Right ventricle myocardium inferior (tissue), 1 donor: ENCODE measurements at regions of chr3 and their contacts with region 1.

Region 1: DNA sequence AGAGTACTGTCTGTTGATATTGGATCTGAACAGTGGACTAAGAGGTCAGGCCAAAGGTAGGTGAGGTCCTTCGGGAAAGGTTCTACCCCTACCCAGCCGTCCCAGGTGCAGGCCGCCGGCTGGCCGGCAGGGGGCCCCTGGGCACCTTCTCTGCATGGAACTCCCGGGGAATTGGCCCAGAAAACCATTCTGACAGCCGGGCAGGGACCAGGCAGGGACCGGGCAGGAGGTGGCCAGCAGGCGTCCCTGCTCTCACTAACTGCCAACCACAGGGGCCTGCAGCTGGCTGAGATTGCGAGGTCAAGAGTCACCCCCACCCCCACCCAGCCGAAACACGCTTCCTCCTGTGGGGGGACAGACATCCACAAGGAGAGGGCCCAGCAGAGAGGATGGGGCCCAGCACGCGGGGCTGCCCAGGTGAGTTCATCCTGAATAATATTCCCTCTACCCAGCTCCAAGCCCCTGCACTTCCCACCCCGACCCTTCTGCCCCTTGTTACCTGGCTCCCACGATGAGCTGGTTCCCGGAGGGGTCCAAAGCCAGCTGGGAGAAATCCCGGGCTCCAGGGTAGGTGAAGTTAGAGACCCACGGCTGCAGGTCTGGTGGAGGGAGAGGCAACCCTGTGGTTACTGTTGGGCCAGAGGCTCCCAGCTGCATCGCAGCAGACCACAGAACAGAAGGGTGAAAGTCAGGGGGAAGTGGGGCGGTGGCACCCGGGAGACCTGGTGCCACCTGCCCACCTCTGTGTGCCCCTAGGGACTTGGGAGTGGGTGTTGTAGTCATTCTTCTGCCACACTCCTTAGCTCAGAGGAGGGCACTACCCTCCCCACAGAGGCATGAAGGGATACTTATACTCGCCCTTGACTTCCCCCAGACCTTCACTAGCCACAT is 84.4 kb downstream of the SEMA5B start:
- DNase-seq: peak; percentile 82
- ATAC-seq: peak; percentile 74

Region 2: GRCh38 chr3:122982216-122983185 is 39.3 kb after region 1 on chr3:
- intact Hi-C with region 1: loop called (anchors 5 kb)
- DNase-seq: no peak
- ATAC-seq: peak; percentile 23

Region 3: DNA sequence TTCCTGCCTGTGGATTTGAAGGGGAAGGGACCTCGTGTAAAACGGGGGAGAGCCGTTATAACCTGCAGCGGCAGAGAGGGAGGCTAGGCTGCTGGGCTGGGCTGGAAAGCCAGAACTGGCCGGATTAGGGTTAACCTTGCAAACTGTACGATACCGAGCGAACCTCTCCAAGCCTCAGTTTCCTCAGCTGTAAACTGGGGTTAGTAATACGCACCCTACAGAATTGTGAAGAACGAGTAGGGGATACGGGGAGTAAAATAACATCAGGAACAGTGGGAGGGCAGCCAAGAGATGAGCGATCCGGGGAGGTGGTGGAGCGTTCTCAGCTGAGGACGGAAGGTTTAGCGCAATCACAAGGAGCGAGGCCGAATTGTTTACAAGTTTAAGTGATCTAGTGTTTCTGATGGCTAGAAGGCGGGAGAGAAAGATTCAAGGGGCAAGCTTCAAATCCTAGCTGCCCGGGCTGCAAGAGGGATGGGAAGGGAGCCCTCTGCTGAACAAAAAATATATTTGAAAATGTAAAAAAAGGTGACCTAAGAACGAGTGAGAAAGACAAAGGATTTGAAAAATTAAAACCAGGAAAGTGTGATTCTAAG is 85.1 kb after region 1 on chr3:
- intact Hi-C with region 1: loop called (anchors 1 kb)
- DNase-seq: no peak
- ATAC-seq: peak; percentile 64

Region 4: DNA sequence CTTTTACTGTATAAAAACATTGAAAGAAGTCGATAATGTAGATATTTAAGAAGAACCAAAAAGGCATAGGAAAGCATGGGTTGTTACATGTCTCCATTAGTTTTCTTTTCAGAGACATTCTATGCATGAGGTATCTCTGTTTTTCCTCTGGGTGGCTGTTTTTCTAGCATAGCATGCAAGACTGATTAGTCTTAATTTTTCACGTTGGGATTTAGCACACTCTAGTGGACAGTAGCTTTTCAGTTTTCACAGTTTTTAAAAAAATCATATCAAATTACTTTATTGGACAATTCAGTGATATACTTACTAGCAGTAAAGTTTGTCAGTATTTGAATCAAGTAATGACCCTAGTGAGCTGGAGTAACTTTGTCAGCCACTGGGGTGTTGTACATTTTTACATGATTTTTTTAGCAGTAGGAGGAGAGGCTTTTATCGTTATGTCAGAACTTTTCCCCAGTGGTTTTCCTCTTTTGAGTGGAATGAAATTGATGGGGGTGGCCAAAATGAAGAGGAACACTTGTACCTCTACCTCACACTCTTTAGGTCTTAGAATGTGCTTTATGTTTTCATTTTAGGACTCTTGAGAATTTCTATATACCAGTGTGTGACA is 315.7 kb after region 1 on chr3:
- intact Hi-C with region 1: loop called (anchors 2 kb)
- DNase-seq: no peak
- ATAC-seq: peak; percentile 56

Region 5: GRCh38 chr3:123559040-123559861 is 616.1 kb after region 1 on chr3:
- intact Hi-C with region 1: loop called (anchors 10 kb)
- DNase-seq: no peak
- ATAC-seq: no peak